PC-9 (cell line): ENCODE measurements at regions of chr18 and their contacts with region 1.

Region 1: DNA sequence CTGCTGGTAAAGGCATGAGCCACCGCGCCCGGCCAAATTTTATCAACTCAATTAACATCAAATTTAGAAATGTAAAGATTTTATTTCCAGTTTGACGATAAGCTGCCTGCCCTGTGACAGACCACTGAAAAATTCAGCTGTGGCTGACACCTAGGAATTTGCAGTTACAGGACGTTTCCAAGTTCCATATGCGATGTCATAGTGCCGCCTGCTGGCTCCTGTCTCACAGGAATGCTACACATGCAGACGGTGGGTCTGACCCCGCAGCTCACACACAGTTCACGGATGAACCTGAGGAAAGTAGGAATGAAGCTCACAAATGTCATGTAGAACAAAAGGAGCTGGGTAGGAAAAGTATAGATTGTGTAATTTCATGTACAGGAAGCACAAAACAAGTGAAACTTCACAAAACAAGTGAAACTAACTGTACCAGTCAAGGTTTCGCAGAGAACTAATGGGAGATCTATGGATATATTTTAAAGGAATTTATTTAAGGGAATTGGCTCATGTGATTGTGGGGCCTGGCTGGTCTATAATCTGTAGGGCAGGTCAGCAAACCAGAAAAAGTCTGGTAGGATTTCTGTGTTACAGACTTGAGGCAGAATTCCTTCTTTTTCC is 13.2 kb upstream of the SEH1L start:
- DNase-seq: peak; percentile 75 to 86
- H3K4me3 ChIP-seq: no peak overlapping the region
- H3K27ac ChIP-seq: no peak overlapping the region
- H3K4me1 ChIP-seq: peaks cover 11% of the 10 kb centered on the region
- H3K27me3 ChIP-seq: no peaks in the 10 kb centered on the region
- CTCF ChIP-seq: peak; percentile 94

Region 2: DNA sequence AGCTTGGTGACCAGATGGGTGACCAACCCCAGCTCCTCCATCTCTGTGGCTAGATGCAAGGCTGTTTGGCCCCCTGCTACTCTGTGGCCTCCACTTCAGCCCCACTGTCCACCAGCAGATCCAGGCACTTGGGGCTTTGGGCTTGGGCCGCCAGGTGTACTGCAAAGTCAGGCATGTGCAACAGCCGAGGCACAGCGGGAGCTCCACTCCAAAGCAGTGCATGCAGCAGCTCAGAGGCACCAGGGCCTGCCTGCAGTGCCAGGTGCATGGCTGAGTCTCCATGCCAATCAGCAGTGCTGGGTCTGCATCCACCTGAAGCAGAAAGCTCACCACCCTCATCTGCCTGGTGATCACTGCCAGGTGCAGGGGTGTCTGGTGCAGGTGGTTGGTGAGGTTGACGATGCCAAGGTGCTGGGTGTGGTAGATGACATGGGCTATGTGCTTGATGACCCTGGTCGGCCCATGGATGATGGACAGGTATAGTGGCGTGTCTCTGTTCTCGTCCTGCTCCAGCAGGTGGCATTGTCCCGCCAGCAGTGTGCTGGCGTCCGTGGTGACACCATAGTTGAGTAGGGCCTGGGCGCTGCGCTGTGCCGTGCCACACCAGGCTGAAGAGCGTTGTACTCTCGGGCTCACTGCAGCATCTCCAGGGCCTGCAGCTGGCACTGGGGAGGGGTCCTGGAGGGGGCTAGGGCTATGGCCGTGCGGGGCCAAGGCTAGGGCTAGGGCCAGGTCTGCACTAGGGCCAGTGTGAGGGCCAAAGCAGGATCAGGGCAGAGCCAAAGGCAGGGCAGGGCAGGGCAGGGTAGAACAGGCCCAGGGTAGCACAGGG is 841.9 kb before region 1 on chr18:
- CTCF ChIA-PET with region 1: no interaction called
- POLR2A ChIA-PET with region 1: no interaction called
- intact Hi-C with region 1: loop called (anchors 2 kb)
- DNase-seq: peak; percentile 41 to 73
- H3K4me3 ChIP-seq: no peak overlapping the region
- H3K27ac ChIP-seq: no peak overlapping the region
- H3K4me1 ChIP-seq: no peaks in the 10 kb centered on the region
- H3K27me3 ChIP-seq: no peaks in the 10 kb centered on the region
- CTCF ChIP-seq: peak; percentile 79

Region 3: DNA sequence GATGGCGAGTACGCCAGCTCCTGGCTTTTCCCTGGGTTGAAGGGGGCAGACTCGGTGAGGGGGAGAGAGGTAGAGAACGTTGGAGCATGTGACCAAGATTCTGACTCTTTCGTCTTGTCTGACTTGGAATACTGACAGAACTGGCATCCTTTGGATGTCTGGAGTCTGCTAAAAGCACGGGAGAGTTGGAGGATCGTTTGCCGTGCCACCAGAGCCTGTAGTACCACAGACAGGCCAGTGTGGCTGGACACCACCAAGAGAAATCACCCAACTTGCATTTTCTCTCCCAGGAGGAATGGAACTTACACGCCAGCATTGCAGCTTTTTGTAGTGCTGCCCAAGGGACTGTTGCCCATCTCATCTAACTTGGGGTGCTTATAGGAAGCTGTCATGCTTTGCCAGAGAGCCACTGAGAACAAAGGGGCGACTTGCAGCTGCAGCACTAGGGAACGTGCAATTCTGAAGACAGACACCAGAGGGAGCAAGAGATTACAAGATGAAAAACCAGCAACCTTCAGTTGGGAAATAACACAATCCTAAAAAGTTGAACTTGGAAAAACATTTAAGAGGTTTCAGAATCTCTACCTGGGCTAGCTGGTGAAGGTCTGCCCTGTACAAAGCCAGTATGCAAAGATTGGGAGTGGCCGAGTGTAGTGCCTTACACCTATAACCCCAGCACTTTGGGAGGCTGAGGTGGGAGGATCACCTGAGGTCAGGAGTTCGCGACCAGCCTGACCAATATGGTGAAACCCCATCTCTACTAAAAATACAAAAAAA is 207.6 kb before region 1 on chr18:
- CTCF ChIA-PET with region 1: interaction called, 9 read pairs
- POLR2A ChIA-PET with region 1: no interaction called
- intact Hi-C with region 1: loop called (anchors 1 kb)
- DNase-seq: peak; percentile 46 to 68
- H3K4me3 ChIP-seq: no peak overlapping the region
- H3K27ac ChIP-seq: no peak overlapping the region
- H3K4me1 ChIP-seq: peaks cover 17% of the 10 kb centered on the region
- H3K27me3 ChIP-seq: no peaks in the 10 kb centered on the region
- CTCF ChIP-seq: peak; percentile 97

Region 4: GRCh38 chr18:12838178-12838634 is 96.4 kb before region 1 on chr18:
- CTCF ChIA-PET with region 1: interaction called, 3 read pairs
- POLR2A ChIA-PET with region 1: interaction called, 12 read pairs
- intact Hi-C with region 1: no loop called
- DNase-seq: peak; percentile 92 to 99
- H3K4me3 ChIP-seq: peak overlapping the region; percentile 45; the same call in 1 of the 2 replicates
- H3K27ac ChIP-seq: peak overlapping the region; percentile 100
- H3K4me1 ChIP-seq: peaks cover 53% of the 10 kb centered on the region
- H3K27me3 ChIP-seq: no peaks in the 10 kb centered on the region
- CTCF ChIP-seq: no peak

Region 5: GRCh38 chr18:13067124-13067523 is 132.6 kb after region 1 on chr18:
- CTCF ChIA-PET with region 1: no interaction called
- POLR2A ChIA-PET with region 1: no interaction called
- intact Hi-C with region 1: no loop called
- DNase-seq: no peak
- H3K4me3 ChIP-seq: no peak overlapping the region
- H3K27ac ChIP-seq: no peak overlapping the region
- H3K4me1 ChIP-seq: no peaks in the 10 kb centered on the region
- H3K27me3 ChIP-seq: no peaks in the 10 kb centered on the region
- CTCF ChIP-seq: no peak

Region 6: DNA sequence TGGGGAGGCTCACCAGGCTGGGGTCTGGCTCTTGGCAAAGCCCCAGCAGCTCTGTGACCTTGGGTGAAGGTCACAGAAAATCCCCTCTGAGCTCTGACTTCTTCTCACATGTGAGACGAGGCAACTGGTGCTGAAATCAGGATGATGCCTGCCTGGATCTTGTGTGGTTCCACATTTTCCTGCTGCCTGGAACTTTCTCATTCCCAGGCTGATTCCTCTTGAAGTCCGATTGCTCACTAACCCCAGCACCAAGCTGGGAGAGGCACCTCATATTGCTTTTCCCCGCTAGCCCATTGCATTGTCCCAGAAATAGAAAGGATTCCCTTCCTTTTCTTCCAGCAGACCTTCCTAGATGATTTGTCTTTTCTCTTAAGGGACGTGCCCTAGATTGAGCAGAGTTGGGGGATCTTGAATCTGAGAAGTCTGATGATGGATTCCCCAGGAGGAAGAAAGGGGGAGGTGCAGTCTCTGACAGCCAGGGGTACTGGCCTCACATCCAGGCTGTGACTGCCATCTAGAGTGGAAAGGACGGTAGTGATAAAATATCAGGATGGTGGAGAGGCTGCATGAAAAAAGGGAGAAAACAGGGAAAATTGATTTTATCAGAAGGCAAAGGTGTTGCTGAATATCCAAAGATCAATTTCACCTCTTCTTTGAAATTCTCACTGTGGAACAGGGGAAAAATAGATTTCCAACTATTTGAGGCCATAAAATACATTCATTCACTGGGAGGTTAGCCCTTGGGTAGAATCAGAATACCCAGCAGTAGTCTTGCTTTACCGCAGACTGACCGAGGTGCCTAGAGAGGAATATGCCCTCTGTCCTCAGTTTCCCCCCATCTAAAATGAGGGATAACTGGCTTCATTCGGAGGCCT is 695.5 kb after region 1 on chr18:
- CTCF ChIA-PET with region 1: no interaction called
- POLR2A ChIA-PET with region 1: no interaction called
- intact Hi-C with region 1: loop called (anchors 2 kb)
- DNase-seq: peak; percentile 37 to 50
- H3K4me3 ChIP-seq: no peak overlapping the region
- H3K27ac ChIP-seq: no peak overlapping the region
- H3K4me1 ChIP-seq: no peaks in the 10 kb centered on the region
- H3K27me3 ChIP-seq: peaks cover 62% of the 10 kb centered on the region
- CTCF ChIP-seq: peak; percentile 77